ENCODE measurements at regions of chr18 and their contacts with region 1.

Region 1: DNA sequence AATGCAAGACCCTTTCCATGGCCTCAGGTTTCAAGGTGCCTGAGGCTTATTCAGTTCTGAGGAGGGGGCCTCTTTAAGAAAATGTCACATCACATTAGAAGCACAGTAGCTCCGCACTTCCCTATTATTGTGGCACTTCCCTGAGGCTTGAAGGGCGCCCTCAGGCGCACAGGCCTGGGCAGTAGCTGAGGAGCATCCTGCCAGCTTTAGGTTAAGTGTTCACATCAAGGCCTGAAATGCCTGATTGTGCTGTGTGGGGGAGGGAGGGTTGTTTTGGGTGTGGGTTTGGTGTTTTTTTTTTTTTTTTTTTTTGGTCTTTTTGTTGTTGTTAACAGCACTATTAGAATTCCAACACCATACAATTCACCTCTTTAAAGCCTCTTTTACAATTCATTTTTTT is 107.9 kb downstream of the CABLES1 start:
- DNase-seq: no peak
- ATAC-seq: no peak
- H3K4me3 ChIP-seq: no peak overlapping the region
- H3K27ac ChIP-seq: peak overlapping the region; percentile 30; the same call in 1 of the 2 replicates
- H3K4me1 ChIP-seq: peaks cover 38% of the 10 kb centered on the region
- H3K27me3 ChIP-seq: no peaks in the 10 kb centered on the region
- CTCF ChIP-seq: no peak; a peak in 1 of 6 replicates
- EP300 ChIP-seq: no peak
- POLR2A ChIP-seq: no peak
- RAD21 ChIP-seq: no peak

Region 2: GRCh38 chr18:22933206-22933957 is 309.8 kb before region 1 on chr18 and contains the start of gene RBBP8:
- CTCF ChIA-PET with region 1: no interaction called
- POLR2A ChIA-PET with region 1: no interaction called
- RAD21 ChIA-PET with region 1: no interaction called
- SMC1A ChIA-PET with region 1: no interaction called
- in situ Hi-C with region 1: no loop called
- intact Hi-C with region 1: no loop called
- DNase-seq: peak; percentile 36
- ATAC-seq: peak; percentile 85
- H3K4me3 ChIP-seq: peak within 1 kb of the TSS; percentile 86
- H3K27ac ChIP-seq: peak within 1 kb of the TSS; percentile 92
- H3K4me1 ChIP-seq: peaks cover 6% of the 10 kb centered on the region
- H3K27me3 ChIP-seq: no peaks in the 10 kb centered on the region
- CTCF ChIP-seq: no peak
- EP300 ChIP-seq: no peak
- POLR2A ChIP-seq: peak; percentile 80
- RAD21 ChIP-seq: no peak
- polyA plus RNA-seq, gene RBBP8: 49.4 to 59.5 TPM

Region 3: DNA sequence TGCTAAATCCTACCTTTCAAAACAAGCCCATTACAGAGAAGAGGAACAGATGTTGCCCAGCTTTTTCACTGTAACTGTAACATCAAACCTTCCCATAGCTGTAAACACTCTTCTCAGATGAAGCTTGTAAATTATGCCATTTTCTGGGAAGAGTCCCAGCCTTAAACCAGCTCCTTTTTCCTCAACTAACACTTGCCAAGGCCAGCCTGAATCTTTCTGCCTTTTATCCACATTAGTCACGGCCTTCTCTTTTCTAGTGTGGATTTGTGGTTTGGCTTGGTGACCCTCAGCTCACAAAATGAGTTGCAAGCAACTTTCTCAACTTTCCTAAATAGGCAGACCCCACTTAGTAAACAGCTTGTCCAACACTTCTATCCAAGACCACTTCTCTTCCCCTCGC is 17.7 kb before region 1 on chr18:
- CTCF ChIA-PET with region 1: interaction called, 51 read pairs
- POLR2A ChIA-PET with region 1: interaction called, 58 read pairs
- RAD21 ChIA-PET with region 1: interaction called, 52 read pairs
- SMC1A ChIA-PET with region 1: interaction called, 52 read pairs
- in situ Hi-C with region 1: no loop called
- intact Hi-C with region 1: no loop called
- DNase-seq: no peak
- ATAC-seq: no peak
- H3K4me3 ChIP-seq: no peak overlapping the region
- H3K27ac ChIP-seq: peak overlapping the region; percentile 70
- H3K4me1 ChIP-seq: peaks cover 58% of the 10 kb centered on the region
- H3K27me3 ChIP-seq: no peaks in the 10 kb centered on the region
- CTCF ChIP-seq: no peak
- EP300 ChIP-seq: no peak
- POLR2A ChIP-seq: no peak
- RAD21 ChIP-seq: no peak

Region 4: GRCh38 chr18:23259701-23260582 is 16.8 kb after region 1 on chr18:
- CTCF ChIA-PET with region 1: interaction called, 6 read pairs
- POLR2A ChIA-PET with region 1: interaction called, 4 read pairs
- RAD21 ChIA-PET with region 1: interaction called, 23 read pairs
- SMC1A ChIA-PET with region 1: interaction called, 15 read pairs
- in situ Hi-C with region 1: no loop called
- intact Hi-C with region 1: no loop called
- DNase-seq: no peak
- ATAC-seq: peak; percentile 82
- H3K4me3 ChIP-seq: peak overlapping the region; percentile 28; the same call in 1 of the 2 replicates
- H3K27ac ChIP-seq: peak overlapping the region; percentile 77
- H3K4me1 ChIP-seq: peaks cover 22% of the 10 kb centered on the region
- H3K27me3 ChIP-seq: no peaks in the 10 kb centered on the region
- CTCF ChIP-seq: no peak
- EP300 ChIP-seq: peak in 1 of 2 experiments; percentile 50; a peak in 1 of 4 replicates
- POLR2A ChIP-seq: no peak; the same call in none of the 2 replicates
- RAD21 ChIP-seq: no peak

Region 5: DNA sequence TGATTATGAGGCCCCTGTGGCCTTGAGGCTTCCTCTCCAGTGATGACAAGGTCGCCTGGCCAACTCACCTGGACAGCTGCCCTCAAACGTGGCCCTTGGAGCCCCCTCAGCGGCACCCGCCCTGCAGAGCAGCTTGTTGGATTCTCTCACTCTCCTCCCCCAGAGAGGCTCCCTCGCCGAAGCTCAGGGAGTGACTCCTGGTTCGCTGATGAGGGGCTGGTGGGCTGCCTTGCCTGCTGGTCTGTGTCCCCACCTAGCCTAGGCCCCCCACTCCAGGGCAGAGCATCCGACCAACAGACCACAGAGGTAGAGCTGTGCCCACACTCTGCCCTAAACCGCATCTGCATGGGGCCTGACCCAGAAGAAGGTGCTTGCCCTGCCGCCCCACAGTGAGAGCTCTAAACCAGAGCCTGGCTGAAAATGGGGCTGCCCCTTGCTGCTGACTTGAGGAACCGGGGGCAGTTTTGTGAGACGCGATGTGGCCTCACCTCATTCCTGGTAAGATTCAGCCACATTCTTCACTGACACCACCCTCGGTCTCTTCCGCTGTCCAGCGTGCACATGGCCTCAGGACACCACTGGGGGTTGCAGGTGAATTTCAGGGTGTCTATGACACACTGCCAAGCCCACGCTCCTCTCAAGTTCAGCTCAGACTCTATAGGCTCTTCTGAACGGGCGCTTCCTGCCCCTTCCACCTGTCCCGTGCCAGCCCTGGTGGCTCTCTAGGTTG is 23.7 kb after region 1 on chr18:
- CTCF ChIA-PET with region 1: interaction called, 13 read pairs
- POLR2A ChIA-PET with region 1: interaction called, 3 read pairs
- RAD21 ChIA-PET with region 1: interaction called, 20 read pairs
- SMC1A ChIA-PET with region 1: interaction called, 12 read pairs
- in situ Hi-C with region 1: no loop called
- intact Hi-C with region 1: no loop called
- DNase-seq: no peak
- ATAC-seq: peak; percentile 83
- H3K4me3 ChIP-seq: no peak overlapping the region
- H3K27ac ChIP-seq: peak overlapping the region; percentile 37; the same call in 1 of the 2 replicates
- H3K4me1 ChIP-seq: peaks cover 14% of the 10 kb centered on the region
- H3K27me3 ChIP-seq: no peaks in the 10 kb centered on the region
- CTCF ChIP-seq: no peak
- EP300 ChIP-seq: peak in 1 of 2 experiments; percentile 11; a peak in 2 of 4 replicates
- POLR2A ChIP-seq: no peak
- RAD21 ChIP-seq: no peak

Region 6: GRCh38 chr18:23307567-23308295 is 64.6 kb after region 1 on chr18:
- CTCF ChIA-PET with region 1: no interaction called
- POLR2A ChIA-PET with region 1: interaction called, 4 read pairs
- RAD21 ChIA-PET with region 1: interaction called, 5 read pairs
- SMC1A ChIA-PET with region 1: interaction called, 10 read pairs
- in situ Hi-C with region 1: no loop called
- intact Hi-C with region 1: no loop called
- DNase-seq: peak; percentile 39
- ATAC-seq: peak; percentile 78
- H3K4me3 ChIP-seq: no peak overlapping the region
- H3K27ac ChIP-seq: peak overlapping the region; percentile 47
- H3K4me1 ChIP-seq: peaks cover 20% of the 10 kb centered on the region
- H3K27me3 ChIP-seq: no peaks in the 10 kb centered on the region
- CTCF ChIP-seq: no peak
- EP300 ChIP-seq: 0 out of 4 replicates have a peak, but pooled peaks of 1 of the 2 experiments have one; percentile 34
- POLR2A ChIP-seq: no peak
- RAD21 ChIP-seq: no peak

Region 7: GRCh38 chr18:23340656-23341055 is 97.5 kb after region 1 on chr18:
- CTCF ChIA-PET with region 1: no interaction called
- POLR2A ChIA-PET with region 1: no interaction called
- RAD21 ChIA-PET with region 1: no interaction called
- SMC1A ChIA-PET with region 1: no interaction called
- in situ Hi-C with region 1: no loop called
- intact Hi-C with region 1: no loop called
- DNase-seq: no peak
- ATAC-seq: no peak
- H3K4me3 ChIP-seq: no peak overlapping the region
- H3K27ac ChIP-seq: no peak overlapping the region
- H3K4me1 ChIP-seq: no peaks in the 10 kb centered on the region
- H3K27me3 ChIP-seq: no peaks in the 10 kb centered on the region
- CTCF ChIP-seq: no peak
- EP300 ChIP-seq: no peak
- POLR2A ChIP-seq: no peak
- RAD21 ChIP-seq: no peak

Measured in GM12878 (cell line).